HEK293T (cell line): ENCODE measurements at regions of chr17 and their contacts with region 1.

Region 1: GRCh38 chr17:49191917-49192741 is 18.2 kb downstream of the GNGT2 start:
- DNase-seq: peak; percentile 78

Region 2: DNA sequence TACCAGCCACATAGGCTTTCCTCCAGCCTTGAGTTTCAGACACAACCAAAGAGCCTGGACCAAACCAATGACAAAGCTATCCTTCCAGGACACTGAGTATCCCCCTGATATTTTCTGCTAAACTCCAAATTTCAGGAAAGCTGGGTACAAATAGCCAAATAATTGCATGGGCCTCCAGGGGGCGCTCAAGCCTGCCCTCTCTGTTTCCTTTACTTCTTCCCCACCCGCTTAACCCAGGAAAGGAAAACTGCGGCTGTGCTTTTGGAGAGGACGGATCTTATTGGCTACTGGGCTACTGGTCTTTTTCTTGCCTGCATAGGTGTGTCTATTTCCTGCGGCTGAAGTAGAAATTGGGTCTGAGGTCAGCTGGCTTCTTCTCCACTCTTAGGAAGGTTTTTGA is 11.8 kb before region 1 on chr17:
- CTCF ChIA-PET with region 1: interaction called, 5 read pairs
- POLR2A ChIA-PET with region 1: interaction called, 22 read pairs
- DNase-seq: peak; percentile 79

Region 3: DNA sequence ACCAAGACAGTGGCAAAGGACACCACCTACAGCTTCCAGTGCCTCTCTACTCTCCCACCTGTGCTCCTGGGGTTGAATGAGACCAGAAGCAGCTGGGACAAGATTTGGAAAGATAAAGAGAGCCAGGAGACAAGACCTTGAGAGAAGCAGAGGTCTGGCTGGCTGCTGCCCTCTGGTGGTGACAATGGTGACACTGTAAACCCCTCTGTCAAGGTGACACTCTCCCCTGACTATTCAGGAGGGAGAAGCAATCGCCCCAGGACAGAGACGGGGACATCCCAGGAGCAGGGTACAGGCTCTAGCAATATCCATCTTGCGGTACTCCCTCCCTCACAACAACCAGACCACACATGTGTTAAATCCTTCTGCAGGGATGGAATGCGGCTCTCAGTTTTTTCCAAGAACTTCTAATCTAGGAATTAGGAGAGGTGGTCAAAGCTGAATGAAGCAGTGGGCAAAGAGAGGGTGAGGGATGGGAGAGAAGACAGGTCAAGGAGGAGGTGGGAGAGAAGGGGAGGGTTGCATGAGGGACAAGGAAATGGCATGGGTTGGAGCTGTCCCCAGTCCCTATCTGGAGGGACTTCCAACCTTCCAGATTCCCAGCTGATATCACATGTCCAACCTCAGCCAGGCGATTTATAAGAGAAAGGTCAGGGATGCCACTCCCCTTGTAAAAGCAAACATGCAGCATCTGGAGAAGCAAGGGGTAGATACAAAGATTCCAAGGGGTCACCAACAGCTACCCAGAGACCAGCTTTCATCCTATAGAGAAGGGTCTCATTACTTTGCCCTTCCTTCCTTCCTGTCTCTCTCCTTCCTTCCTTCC is 35.5 kb after region 1 on chr17:
- CTCF ChIA-PET with region 1: interaction called, 4 read pairs
- POLR2A ChIA-PET with region 1: interaction called, 12 read pairs
- DNase-seq: peak; percentile 78